CD4-positive, alpha-beta T cell (primary cell): ENCODE measurements at regions of chr17 and their contacts with region 1.

Region 1: GRCh38 chr17:64129764-64130558 is at the start of gene ERN1:
- DNase-seq: peak; percentile 85 to 95 (median 91)
- ATAC-seq: peak; percentile 86
- H3K4me3 ChIP-seq: peak within 1 kb of the TSS; percentile 89
- H3K4me3 Mint-ChIP-seq: peak within 1 kb of the TSS; percentile 99
- H3K27ac ChIP-seq: peak within 1 kb of the TSS; percentile 88 to 96
- H3K27ac Mint-ChIP-seq: peak within 1 kb of the TSS; percentile 92
- H3K4me1 ChIP-seq: peaks cover 36% of the 10 kb centered on the region
- H3K4me1 Mint-ChIP-seq: peaks cover 57% of the 10 kb centered on the region
- H3K27me3 ChIP-seq: no peaks in the 10 kb centered on the region
- H3K27me3 Mint-ChIP-seq: no peaks in the 10 kb centered on the region
- CTCF ChIP-seq: no peak
- total RNA-seq, gene ERN1: 62.7 to 67.8 TPM

Region 2: DNA sequence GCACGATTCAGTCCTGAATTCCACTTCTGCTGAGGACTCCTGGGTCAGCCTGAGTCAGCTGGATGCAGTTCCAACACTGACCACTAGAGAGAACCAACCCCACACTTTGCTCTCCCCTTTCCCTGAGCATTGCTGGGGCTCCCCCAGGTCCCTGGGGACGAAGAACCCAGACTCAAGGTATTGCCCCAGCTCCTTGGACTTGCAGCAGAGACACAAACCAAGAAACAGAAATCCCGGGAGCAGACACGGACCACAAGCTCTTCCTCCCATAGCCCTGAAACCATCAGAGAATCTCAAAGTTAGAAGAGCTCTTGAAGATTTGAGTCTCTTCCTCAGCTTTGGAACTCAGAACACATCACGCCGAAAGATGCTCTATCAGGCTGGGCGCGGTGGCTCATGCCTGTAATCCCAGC is 210.6 kb before region 1 on chr17:
- CTCF ChIA-PET with region 1: interaction called, 31 read pairs
- POLR2A ChIA-PET with region 1: interaction called, 10 read pairs
- intact Hi-C with region 1: loop called (anchors 1 to 5 kb)
- DNase-seq: peak; percentile 58 to 89 (median 66)
- ATAC-seq: peak; percentile 100
- H3K4me3 ChIP-seq: no peak overlapping the region
- H3K4me3 Mint-ChIP-seq: no peak overlapping the region
- H3K27ac ChIP-seq: no peak overlapping the region
- H3K27ac Mint-ChIP-seq: peak overlapping the region; percentile 9
- H3K4me1 ChIP-seq: peaks cover 8% of the 10 kb centered on the region
- H3K4me1 Mint-ChIP-seq: peaks cover 6% of the 10 kb centered on the region
- H3K27me3 ChIP-seq: no peaks in the 10 kb centered on the region
- H3K27me3 Mint-ChIP-seq: no peaks in the 10 kb centered on the region
- CTCF ChIP-seq: peak; percentile 95

Region 3: GRCh38 chr17:64051153-64051552 is 78.8 kb before region 1 on chr17:
- CTCF ChIA-PET with region 1: interaction called, 4 read pairs
- POLR2A ChIA-PET with region 1: interaction called, 67 read pairs
- intact Hi-C with region 1: no loop called
- DNase-seq: peak in 5 of 14 experiments; percentile 16 to 88 (median 69)
- ATAC-seq: peak; percentile 100
- H3K4me3 ChIP-seq: no peak overlapping the region
- H3K4me3 Mint-ChIP-seq: peak overlapping the region; percentile 17
- H3K27ac ChIP-seq: peak overlapping the region in 1 of 2 donors; percentile 78
- H3K27ac Mint-ChIP-seq: peak overlapping the region; percentile 85
- H3K4me1 ChIP-seq: peaks cover 59% of the 10 kb centered on the region
- H3K4me1 Mint-ChIP-seq: peaks cover 57% of the 10 kb centered on the region
- H3K27me3 ChIP-seq: no peaks in the 10 kb centered on the region
- H3K27me3 Mint-ChIP-seq: no peaks in the 10 kb centered on the region
- CTCF ChIP-seq: no peak

Region 4: GRCh38 chr17:64081802-64082799 is 47.9 kb before region 1 on chr17:
- CTCF ChIA-PET with region 1: interaction called, 4 read pairs
- POLR2A ChIA-PET with region 1: interaction called, 47 read pairs
- intact Hi-C with region 1: loop called (anchors 5 kb)
- DNase-seq: peak in 8 of 14 experiments; percentile 12 to 84 (median 30)
- ATAC-seq: peak; percentile 83
- H3K4me3 ChIP-seq: peak overlapping the region; percentile 11
- H3K4me3 Mint-ChIP-seq: peak overlapping the region; percentile 50
- H3K27ac ChIP-seq: peak overlapping the region in 1 of 2 donors; percentile 67
- H3K27ac Mint-ChIP-seq: no peak overlapping the region
- H3K4me1 ChIP-seq: peaks cover 64% of the 10 kb centered on the region
- H3K4me1 Mint-ChIP-seq: peaks cover 27% of the 10 kb centered on the region
- H3K27me3 ChIP-seq: no peaks in the 10 kb centered on the region
- H3K27me3 Mint-ChIP-seq: no peaks in the 10 kb centered on the region
- CTCF ChIP-seq: peak; percentile 28

Region 5: GRCh38 chr17:64117981-64118979 is 11.7 kb before region 1 on chr17:
- CTCF ChIA-PET with region 1: interaction called, 11 read pairs
- POLR2A ChIA-PET with region 1: interaction called, 22 read pairs
- intact Hi-C with region 1: no loop called
- DNase-seq: peak in 2 of 14 experiments; percentile 44 to 49
- ATAC-seq: no peak
- H3K4me3 ChIP-seq: no peak overlapping the region
- H3K4me3 Mint-ChIP-seq: no peak overlapping the region
- H3K27ac ChIP-seq: no peak overlapping the region
- H3K27ac Mint-ChIP-seq: peak overlapping the region; percentile 35
- H3K4me1 ChIP-seq: peaks cover 73% of the 10 kb centered on the region
- H3K4me1 Mint-ChIP-seq: peaks cover 67% of the 10 kb centered on the region
- H3K27me3 ChIP-seq: no peaks in the 10 kb centered on the region
- H3K27me3 Mint-ChIP-seq: no peaks in the 10 kb centered on the region
- CTCF ChIP-seq: no peak